CD4-positive, alpha-beta T cell (primary cell): ENCODE measurements at regions of chr2 and their contacts with region 1.

Region 1: DNA sequence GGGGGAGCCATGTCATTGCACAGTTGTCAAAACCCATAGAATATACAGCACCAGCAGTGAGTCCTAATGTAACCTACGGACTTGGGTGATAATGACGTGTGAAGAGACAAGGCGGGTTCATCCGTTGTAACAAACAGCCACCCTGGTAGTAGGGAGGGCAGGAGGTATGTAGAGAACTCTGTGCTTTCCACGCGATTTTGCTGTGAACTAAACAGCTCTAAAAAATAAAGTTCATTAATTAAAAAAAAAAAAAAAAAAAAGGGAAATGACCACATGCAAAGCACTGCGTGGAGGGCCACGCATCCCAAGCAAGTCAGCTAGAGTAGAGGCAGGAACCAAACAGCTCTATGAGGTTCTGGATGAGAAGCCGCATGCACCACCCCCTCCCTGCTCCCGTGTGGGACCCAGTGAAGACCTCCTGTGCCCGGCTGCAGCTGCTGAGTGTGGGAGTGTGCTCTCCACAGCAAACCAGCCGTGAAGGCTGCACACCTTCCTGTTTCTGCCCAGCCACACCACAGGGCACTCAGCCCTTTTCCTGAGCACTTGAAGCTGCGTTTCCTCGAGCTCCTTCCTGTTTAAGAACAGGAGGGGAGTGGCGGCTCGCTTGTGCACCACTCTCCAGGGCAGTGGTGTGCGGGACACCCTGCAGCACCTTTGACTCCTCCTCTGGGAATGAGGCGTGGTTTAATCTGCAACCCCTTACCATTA is 65.6 kb downstream of the ODC1 start:
- DNase-seq: peak; percentile 13 to 81 (median 34)
- ATAC-seq: peak; percentile 94
- H3K4me3 ChIP-seq: peak overlapping the region; percentile 46
- H3K4me3 Mint-ChIP-seq: peak overlapping the region; percentile 82
- H3K27ac ChIP-seq: peak overlapping the region; percentile 23 to 59
- H3K27ac Mint-ChIP-seq: peak overlapping the region; percentile 96
- H3K4me1 ChIP-seq: peaks cover 96% of the 10 kb centered on the region
- H3K4me1 Mint-ChIP-seq: peaks cover 93% of the 10 kb centered on the region
- H3K27me3 ChIP-seq: no peaks in the 10 kb centered on the region
- H3K27me3 Mint-ChIP-seq: no peaks in the 10 kb centered on the region
- CTCF ChIP-seq: no peak

Region 2: GRCh38 chr2:10331027-10331701 is 51.3 kb before region 1 on chr2:
- CTCF ChIA-PET with region 1: interaction called, 3 read pairs
- POLR2A ChIA-PET with region 1: interaction called, 68 read pairs
- intact Hi-C with region 1: loop called (anchors 1 to 5 kb)
- DNase-seq: peak; percentile 54 to 87 (median 74)
- ATAC-seq: peak; percentile 65
- H3K4me3 ChIP-seq: peak overlapping the region; percentile 74
- H3K4me3 Mint-ChIP-seq: peak overlapping the region; percentile 91
- H3K27ac ChIP-seq: peak overlapping the region; percentile 90 to 95
- H3K27ac Mint-ChIP-seq: peak overlapping the region; percentile 94
- H3K4me1 ChIP-seq: peaks cover 77% of the 10 kb centered on the region
- H3K4me1 Mint-ChIP-seq: peaks cover 89% of the 10 kb centered on the region
- H3K27me3 ChIP-seq: no peaks in the 10 kb centered on the region
- H3K27me3 Mint-ChIP-seq: no peaks in the 10 kb centered on the region
- CTCF ChIP-seq: no peak